ENCODE measurements at regions of chr12 and their contacts with region 1.

Region 1: DNA sequence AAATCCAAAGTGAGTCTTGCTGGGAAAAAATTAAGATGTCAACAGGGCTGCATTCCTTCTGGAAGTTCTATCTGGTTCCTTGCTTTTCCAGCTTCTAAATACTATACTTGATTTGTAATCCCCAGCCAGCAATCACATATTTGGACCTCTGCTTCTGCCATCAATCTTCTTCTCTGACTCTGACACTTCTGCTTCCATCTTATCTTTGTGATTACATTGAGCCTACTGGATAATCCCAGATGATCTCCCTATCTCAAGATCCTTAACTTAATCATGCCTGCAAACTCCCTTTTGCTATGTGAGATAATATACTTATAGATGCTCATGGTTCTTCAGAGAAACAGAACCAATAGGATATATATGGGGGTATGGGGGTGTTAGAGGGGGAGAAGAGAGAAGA is 49.9 kb upstream of the ZDHHC17 start:
- DNase-seq: no peak
- H3K4me3 ChIP-seq: no peak overlapping the region
- H3K27ac ChIP-seq: no peak overlapping the region
- H3K4me1 ChIP-seq: peaks cover 3% of the 10 kb centered on the region
- H3K27me3 ChIP-seq: no peaks in the 10 kb centered on the region
- CTCF ChIP-seq: no peak
- POLR2A ChIP-seq: no peak

Region 2: DNA sequence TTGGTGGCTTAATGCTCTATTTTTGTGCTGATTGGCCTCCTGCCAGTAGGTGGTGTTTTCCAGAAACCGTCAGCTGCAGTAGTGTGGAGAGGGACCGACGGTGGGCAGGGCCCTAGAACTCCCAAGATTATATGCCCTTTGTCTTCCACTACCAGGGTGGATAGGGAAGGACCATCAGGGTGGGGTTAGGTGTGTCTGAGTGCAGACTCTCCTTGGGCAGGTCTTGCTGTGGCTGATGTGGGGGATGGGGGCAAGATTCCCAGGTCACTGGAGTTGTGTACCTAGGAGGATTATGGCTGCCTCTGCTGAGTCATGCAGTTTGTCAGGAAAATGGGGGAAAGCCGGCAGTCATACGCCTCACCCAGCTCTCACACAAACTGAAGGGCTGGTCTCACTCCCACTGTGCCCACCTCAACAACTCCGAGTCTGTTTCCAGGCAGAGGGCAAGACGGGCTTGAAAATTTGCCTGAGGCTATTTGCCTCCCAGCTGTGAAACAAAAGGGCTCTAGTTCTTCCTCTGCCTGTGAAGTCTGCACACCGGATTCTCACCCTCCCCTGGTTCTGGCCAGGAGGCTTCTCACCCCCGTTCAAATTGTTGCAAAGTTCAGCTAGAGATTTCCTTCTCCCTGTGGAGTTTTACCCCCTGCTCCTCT is 25.1 kb after region 1 on chr12:
- CTCF ChIA-PET with region 1: no interaction called
- POLR2A ChIA-PET with region 1: no interaction called
- dilution Hi-C with region 1: no loop called
- intact Hi-C with region 1: loop called (anchors 1 kb)
- DNase-seq: no peak
- H3K4me3 ChIP-seq: no peak overlapping the region
- H3K27ac ChIP-seq: no peak overlapping the region
- H3K4me1 ChIP-seq: no peaks in the 10 kb centered on the region
- H3K27me3 ChIP-seq: peaks cover 2 to 3% of the 10 kb centered on the region in 2 experiments
- CTCF ChIP-seq: no peak
- POLR2A ChIP-seq: no peak

Measured in endothelial cell of umbilical vein (primary cell).